MCF 10A (cell line): ENCODE measurements at regions of chr3 and their contacts with region 1.

Region 1: DNA sequence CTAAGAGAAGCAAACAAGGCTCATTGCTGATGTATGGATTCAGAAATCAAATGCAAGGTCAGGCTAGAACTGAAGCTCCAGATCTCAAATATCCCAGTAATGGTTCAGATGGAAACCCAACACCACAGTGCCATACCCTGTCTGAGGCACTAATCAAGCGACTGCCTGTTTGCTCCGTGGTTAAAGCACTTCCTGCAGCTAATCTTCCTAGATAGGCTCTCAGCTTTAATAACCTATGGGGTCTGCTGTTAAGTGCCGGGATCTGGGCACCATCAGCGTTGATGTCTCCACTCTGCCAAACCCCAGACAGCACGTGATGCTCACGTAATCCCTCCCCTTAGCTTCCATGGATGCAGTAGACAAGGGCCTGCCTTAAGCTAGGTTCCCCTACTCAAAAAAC is 262.6 kb downstream of the MECOM start:
- DNase-seq: no peak
- H3K4me3 Mint-ChIP-seq: no peak overlapping the region
- H3K27ac Mint-ChIP-seq: no peak overlapping the region
- H3K4me1 Mint-ChIP-seq: no peaks in the 10 kb centered on the region
- H3K27me3 Mint-ChIP-seq: no peaks in the 10 kb centered on the region
- CTCF ChIP-seq: no peak

Region 2: DNA sequence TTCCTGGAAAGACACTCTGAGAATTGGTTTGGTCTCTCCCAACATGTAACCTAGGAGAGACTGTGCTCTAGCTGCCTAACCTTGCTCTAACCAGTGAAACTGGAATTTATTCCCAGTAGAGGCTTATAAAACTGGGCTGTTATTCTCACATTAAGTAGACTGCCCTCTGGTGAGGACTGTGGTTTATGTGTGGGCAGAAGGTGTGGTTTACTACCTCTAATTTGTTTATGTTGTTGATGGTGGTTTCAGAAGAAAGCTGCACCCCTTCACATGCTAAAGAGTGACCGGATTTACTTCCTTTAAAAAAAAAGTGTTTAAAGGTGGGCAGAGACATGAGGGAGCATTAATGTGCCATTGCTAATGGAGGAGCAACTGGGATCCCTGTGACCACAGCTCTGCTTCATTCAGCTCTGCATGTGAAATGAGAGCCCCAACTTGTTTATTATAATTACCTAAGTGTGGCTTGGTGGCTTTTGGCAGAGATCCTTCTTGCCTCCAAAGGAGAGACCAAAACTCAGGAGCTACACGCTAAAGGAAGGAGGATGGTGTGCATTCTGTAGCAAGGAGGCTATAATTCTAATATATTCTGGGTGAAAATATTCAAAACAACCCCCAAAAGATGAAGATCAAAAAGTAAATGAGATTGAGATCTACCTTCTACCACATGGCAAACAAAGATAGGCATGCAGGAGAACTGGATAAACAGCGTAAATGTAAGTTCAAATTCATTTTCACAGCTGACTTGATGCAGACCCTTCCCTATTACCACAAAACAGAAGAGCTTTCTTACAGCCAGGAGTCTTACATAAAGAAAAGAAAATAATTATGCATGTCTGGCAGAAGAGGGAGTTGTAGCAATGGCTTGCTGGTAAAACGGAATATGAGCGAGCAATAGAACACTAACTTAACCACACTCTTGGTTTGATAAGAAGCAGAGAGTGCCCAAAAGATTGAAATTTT is 10.3 kb before region 1 on chr3:
- CTCF ChIA-PET with region 1: interaction called, 25 read pairs
- POLR2A ChIA-PET with region 1: interaction called, 3 read pairs
- intact Hi-C with region 1: no loop called
- DNase-seq: peak; percentile 21
- H3K4me3 Mint-ChIP-seq: no peak overlapping the region
- H3K27ac Mint-ChIP-seq: no peak overlapping the region
- H3K4me1 Mint-ChIP-seq: no peaks in the 10 kb centered on the region
- H3K27me3 Mint-ChIP-seq: no peaks in the 10 kb centered on the region
- CTCF ChIP-seq: peak; percentile 9